ENCODE measurements at regions of chr9 and their contacts with region 1.

Region 1: GRCh38 chr9:132507746-132508469 is 74.5 kb upstream of the BARHL1 start:
- DNase-seq: peak; percentile 77
- H3K4me3 ChIP-seq: no peak overlapping the region
- H3K27ac ChIP-seq: no peak overlapping the region
- H3K4me1 ChIP-seq: no peaks in the 10 kb centered on the region
- CTCF ChIP-seq: peak; percentile 91

Region 2: GRCh38 chr9:132240753-132241493 is 267.0 kb before region 1 on chr9:
- CTCF ChIA-PET with region 1: no interaction called
- POLR2A ChIA-PET with region 1: no interaction called
- intact Hi-C with region 1: no loop called
- DNase-seq: peak; percentile 95
- H3K4me3 ChIP-seq: peak overlapping the region; percentile 69
- H3K27ac ChIP-seq: no peak overlapping the region
- H3K4me1 ChIP-seq: peaks cover 17% of the 10 kb centered on the region
- CTCF ChIP-seq: no peak

Region 3: DNA sequence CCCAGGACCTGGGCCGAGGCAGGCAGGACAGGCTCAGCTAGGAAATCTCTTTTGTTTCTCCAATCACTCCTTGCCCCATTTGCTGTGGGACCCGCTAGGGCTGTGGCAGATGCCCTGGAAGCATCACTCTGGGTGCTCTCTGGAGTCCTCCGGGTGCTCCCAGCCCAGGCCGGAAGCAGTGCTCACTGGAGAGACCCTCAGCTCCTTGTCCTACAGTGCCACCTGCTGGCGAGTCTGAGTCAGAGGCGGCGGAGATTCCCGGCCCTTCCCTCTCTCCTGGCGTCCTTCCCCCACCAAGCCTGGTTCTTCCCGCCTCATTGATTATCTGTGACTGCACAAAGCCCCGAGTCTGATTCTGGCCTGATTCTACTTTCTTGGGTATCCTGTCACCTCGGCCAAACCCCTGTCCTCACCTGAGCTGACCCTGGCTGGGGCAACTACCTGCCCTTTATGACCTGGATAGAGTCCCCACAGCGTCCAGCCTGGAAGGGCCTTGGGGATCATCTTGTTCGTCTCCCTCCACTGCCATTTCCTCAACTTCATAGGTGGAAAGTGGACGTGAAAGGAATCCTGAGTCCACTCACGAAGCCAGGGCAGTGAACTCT is 67.2 kb after region 1 on chr9:
- CTCF ChIA-PET with region 1: no interaction called
- POLR2A ChIA-PET with region 1: no interaction called
- intact Hi-C with region 1: loop called (anchors 1 kb)
- DNase-seq: peak; percentile 79
- H3K4me3 ChIP-seq: no peak overlapping the region
- H3K27ac ChIP-seq: no peak overlapping the region
- H3K4me1 ChIP-seq: no peaks in the 10 kb centered on the region
- CTCF ChIP-seq: peak; percentile 89

Region 4: GRCh38 chr9:132800038-132800648 is 292.2 kb after region 1 on chr9:
- CTCF ChIA-PET with region 1: no interaction called
- POLR2A ChIA-PET with region 1: no interaction called
- intact Hi-C with region 1: loop called (anchors 1 kb)
- DNase-seq: peak; percentile 73
- H3K4me3 ChIP-seq: no peak overlapping the region
- H3K27ac ChIP-seq: no peak overlapping the region
- H3K4me1 ChIP-seq: no peaks in the 10 kb centered on the region
- CTCF ChIP-seq: peak; percentile 89

Measured in OCI-LY7 (cell line).